ENCODE measurements at regions of chr22 and their contacts with region 1.

Region 1: GRCh38 chr22:42007922-42008321 is 9.3 kb downstream of the WBP2NL start:
- DNase-seq: no peak
- H3K4me3 Mint-ChIP-seq: no peak overlapping the region
- H3K27ac Mint-ChIP-seq: no peak overlapping the region
- H3K4me1 Mint-ChIP-seq: no peaks in the 10 kb centered on the region
- H3K27me3 Mint-ChIP-seq: peaks cover 6% of the 10 kb centered on the region

Region 2: GRCh38 chr22:42052765-42053164 is 44.8 kb after region 1 on chr22:
- CTCF ChIA-PET with region 1: no interaction called
- intact Hi-C with region 1: loop called (anchors 5 kb)
- DNase-seq: no peak
- H3K4me3 Mint-ChIP-seq: no peak overlapping the region
- H3K27ac Mint-ChIP-seq: no peak overlapping the region
- H3K4me1 Mint-ChIP-seq: no peaks in the 10 kb centered on the region
- H3K27me3 Mint-ChIP-seq: no peaks in the 10 kb centered on the region